ENCODE measurements at regions of chr4 and their contacts with region 1.

Region 1: DNA sequence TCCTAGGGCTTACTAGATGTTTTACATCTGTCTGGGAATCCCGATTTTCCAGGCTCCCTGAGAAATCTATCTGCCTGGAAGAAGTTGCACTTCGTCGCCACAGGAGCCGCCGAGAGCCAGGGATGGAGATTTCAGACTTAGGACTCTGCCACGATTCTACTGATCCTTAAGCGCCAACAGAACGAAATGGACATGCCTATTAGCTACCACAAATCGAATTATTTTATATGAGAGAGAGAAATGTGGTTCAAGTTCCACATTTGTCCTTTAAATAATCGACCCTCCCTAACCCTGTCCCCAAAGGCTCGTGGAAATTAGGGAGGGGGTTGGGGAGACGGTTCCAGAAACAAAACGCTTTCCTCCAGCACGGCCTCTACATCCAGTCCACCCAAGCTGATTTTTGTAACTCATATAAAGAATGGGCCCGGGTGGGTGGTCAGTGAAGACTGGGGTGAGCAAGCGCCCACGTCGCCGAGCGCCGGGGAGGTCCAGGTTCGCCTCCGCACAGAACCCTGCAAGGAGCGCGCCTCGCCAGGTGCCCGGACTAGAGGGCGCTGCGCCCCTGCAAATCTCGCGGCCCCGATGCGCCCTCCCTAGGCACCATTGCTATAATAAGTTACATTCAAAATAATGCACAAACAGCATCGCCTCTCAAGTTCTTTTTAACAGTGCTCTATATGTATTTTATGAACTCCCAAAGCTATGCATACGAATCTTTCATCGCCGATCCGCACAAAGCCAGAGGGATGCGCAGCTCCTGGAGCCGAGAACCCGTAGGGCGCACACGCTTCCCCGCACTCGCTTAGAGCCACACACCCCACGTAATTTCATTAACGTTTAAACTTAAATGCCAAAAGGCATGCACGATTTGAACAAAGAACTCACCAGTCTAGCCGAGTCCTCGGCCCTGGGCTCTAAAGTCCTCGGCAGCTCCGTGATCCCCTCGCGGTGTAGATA is 2.1 kb upstream of the FAT1 start:
- DNase-seq: peak; percentile 72
- ATAC-seq: peak; percentile 39
- H3K4me3 ChIP-seq: peak overlapping the region; percentile 96
- H3K27ac ChIP-seq: peak overlapping the region; percentile 90
- H3K4me1 ChIP-seq: peaks cover 29% of the 10 kb centered on the region
- H3K27me3 ChIP-seq: no peaks in the 10 kb centered on the region
- CTCF ChIP-seq: peak; percentile 81

Region 2: DNA sequence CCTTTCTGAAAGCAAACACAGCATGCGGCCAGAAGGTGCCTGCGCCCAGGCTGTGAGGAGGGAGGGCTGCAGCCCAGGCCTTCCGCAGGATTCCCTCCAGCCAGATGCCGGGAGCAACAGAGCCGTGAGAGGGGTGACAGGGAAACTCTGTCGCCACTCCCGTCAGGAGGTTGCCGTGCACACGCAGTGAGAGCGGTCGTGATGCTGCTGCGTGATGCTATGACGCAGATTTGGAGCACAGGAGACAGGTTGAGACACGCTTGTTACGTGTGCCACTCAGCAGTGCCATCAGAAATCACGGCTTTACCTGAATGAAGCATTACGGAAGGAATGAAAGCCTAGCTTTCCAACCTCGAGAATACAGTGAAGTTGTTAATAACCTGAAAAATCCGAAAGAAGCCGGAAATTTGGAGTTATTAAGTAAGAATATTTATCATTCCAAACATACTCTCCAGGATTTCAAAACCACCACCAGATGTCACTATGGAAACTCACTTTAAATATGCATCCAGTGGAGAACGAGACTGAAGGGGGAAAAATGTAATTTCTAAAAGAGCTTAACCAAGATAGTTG is 56.5 kb before region 1 on chr4:
- CTCF ChIA-PET with region 1: interaction called, 6 read pairs
- POLR2A ChIA-PET with region 1: interaction called, 3 read pairs
- intact Hi-C with region 1: loop called (anchors 1 kb)
- DNase-seq: peak; percentile 59
- ATAC-seq: peak; percentile 64
- H3K4me3 ChIP-seq: no peak overlapping the region
- H3K27ac ChIP-seq: no peak overlapping the region
- H3K4me1 ChIP-seq: peaks cover 16% of the 10 kb centered on the region
- H3K27me3 ChIP-seq: no peaks in the 10 kb centered on the region
- CTCF ChIP-seq: peak; percentile 65

Region 3: GRCh38 chr4:186781032-186781917 is 55.5 kb after region 1 on chr4:
- CTCF ChIA-PET with region 1: no interaction called
- POLR2A ChIA-PET with region 1: interaction called, 5 read pairs
- intact Hi-C with region 1: loop called (anchors 2 kb)
- DNase-seq: peak; percentile 77
- ATAC-seq: peak; percentile 99
- H3K4me3 ChIP-seq: no peak overlapping the region
- H3K27ac ChIP-seq: peak overlapping the region; percentile 69
- H3K4me1 ChIP-seq: peaks cover 17% of the 10 kb centered on the region
- H3K27me3 ChIP-seq: no peaks in the 10 kb centered on the region
- CTCF ChIP-seq: no peak

Region 4: GRCh38 chr4:186859420-186859819 is 133.7 kb after region 1 on chr4:
- CTCF ChIA-PET with region 1: no interaction called
- POLR2A ChIA-PET with region 1: no interaction called
- intact Hi-C with region 1: loop called (anchors 1 kb)
- DNase-seq: no peak
- ATAC-seq: no peak
- H3K4me3 ChIP-seq: no peak overlapping the region
- H3K27ac ChIP-seq: no peak overlapping the region
- H3K4me1 ChIP-seq: peaks cover 14% of the 10 kb centered on the region
- H3K27me3 ChIP-seq: no peaks in the 10 kb centered on the region
- CTCF ChIP-seq: no peak

Region 5: DNA sequence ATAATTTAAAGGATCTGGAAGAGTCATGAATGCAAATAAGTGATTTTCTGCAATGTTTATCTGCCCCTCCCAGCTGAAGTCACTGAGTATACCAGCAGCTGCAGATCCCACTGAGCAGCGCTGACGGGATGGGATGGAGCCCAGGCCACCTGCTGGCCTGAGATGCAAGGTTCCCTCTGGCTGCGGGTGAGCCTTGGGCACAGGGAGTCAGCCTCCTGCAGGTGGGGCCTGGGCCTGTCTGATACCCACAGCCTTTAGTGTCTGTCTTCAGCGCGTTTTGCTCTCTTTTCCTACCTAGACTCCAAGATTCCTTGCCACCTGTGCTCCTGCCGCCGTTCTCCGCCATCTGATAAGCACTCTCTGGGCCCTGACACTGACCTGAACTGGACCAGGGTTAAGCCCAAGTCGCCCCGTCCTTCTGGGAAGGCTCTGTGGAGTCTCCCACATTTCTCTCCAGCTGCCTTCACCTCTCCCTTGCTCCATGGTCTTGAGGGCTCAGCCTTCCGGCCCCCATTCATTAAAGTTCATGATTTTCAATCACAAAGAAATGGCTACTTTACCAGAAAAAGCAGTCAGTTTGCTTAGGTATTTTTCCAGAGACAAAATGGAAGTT is 221.0 kb after region 1 on chr4:
- CTCF ChIA-PET with region 1: no interaction called
- POLR2A ChIA-PET with region 1: no interaction called
- intact Hi-C with region 1: loop called (anchors 1 kb)
- DNase-seq: peak; percentile 81
- ATAC-seq: peak; percentile 100
- H3K4me3 ChIP-seq: no peak overlapping the region
- H3K27ac ChIP-seq: no peak overlapping the region
- H3K4me1 ChIP-seq: no peaks in the 10 kb centered on the region
- H3K27me3 ChIP-seq: no peaks in the 10 kb centered on the region
- CTCF ChIP-seq: peak; percentile 75

Region 6: GRCh38 chr4:187309456-187309855 is 583.7 kb after region 1 on chr4:
- CTCF ChIA-PET with region 1: no interaction called
- POLR2A ChIA-PET with region 1: no interaction called
- intact Hi-C with region 1: loop called (anchors 5 kb)
- DNase-seq: peak; percentile 80
- ATAC-seq: peak; percentile 87
- H3K4me3 ChIP-seq: no peak overlapping the region
- H3K27ac ChIP-seq: peak overlapping the region; percentile 52
- H3K4me1 ChIP-seq: peaks cover 38% of the 10 kb centered on the region
- H3K27me3 ChIP-seq: no peaks in the 10 kb centered on the region
- CTCF ChIP-seq: no peak

Region 7: GRCh38 chr4:187606581-187606980 is 880.8 kb after region 1 on chr4:
- CTCF ChIA-PET with region 1: no interaction called
- POLR2A ChIA-PET with region 1: no interaction called
- intact Hi-C with region 1: loop called (anchors 5 kb)
- DNase-seq: peak; percentile 64
- ATAC-seq: peak; percentile 60
- H3K4me3 ChIP-seq: no peak overlapping the region
- H3K27ac ChIP-seq: no peak overlapping the region
- H3K4me1 ChIP-seq: peaks cover 16% of the 10 kb centered on the region
- H3K27me3 ChIP-seq: no peaks in the 10 kb centered on the region
- CTCF ChIP-seq: peak; percentile 81